Activated B cell treated with CpG ODN at 0.5 μM for 24 hours (primary cell): ENCODE measurements at regions of chr7 and their contacts with region 1.

Region 1: GRCh38 chr7:100604028-100604975 is 2.1 kb downstream of the PCOLCE start:
- DNase-seq: peak; percentile 75
- ATAC-seq: peak; percentile 78
- H3K4me3 Mint-ChIP-seq: peak overlapping the region; percentile 85
- H3K27ac Mint-ChIP-seq: peak overlapping the region; percentile 30
- H3K4me1 Mint-ChIP-seq: peaks cover 19% of the 10 kb centered on the region
- H3K27me3 Mint-ChIP-seq: no peaks in the 10 kb centered on the region
- CTCF ChIP-seq: no peak

Region 2: DNA sequence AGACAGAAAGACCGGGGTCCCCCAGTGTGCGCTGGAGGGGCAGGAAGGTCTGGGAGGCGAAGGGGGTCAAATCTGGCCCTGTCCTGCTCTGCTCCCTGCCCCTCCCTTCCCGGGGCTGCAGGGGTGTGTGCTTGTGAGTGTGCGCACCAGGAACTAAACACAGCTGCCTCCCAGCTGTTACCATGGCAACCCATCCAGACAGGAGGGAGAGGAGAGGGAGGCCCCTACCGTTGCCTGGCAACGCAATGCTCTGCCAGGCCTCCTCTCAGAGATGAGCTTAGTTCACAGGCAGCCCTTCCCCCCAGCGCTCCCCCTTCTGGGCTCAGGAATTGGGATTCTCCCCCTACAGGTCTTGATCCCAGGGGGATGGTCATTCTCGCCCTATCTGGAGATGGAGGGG is 114.5 kb before region 1 on chr7:
- CTCF ChIA-PET with region 1: no interaction called
- POLR2A ChIA-PET with region 1: no interaction called
- intact Hi-C with region 1: no loop called
- DNase-seq: no peak
- ATAC-seq: peak; percentile 35
- H3K4me3 Mint-ChIP-seq: no peak overlapping the region
- H3K27ac Mint-ChIP-seq: no peak overlapping the region
- H3K4me1 Mint-ChIP-seq: peaks cover 6% of the 10 kb centered on the region
- H3K27me3 Mint-ChIP-seq: peaks cover 26% of the 10 kb centered on the region
- CTCF ChIP-seq: no peak

Region 3: DNA sequence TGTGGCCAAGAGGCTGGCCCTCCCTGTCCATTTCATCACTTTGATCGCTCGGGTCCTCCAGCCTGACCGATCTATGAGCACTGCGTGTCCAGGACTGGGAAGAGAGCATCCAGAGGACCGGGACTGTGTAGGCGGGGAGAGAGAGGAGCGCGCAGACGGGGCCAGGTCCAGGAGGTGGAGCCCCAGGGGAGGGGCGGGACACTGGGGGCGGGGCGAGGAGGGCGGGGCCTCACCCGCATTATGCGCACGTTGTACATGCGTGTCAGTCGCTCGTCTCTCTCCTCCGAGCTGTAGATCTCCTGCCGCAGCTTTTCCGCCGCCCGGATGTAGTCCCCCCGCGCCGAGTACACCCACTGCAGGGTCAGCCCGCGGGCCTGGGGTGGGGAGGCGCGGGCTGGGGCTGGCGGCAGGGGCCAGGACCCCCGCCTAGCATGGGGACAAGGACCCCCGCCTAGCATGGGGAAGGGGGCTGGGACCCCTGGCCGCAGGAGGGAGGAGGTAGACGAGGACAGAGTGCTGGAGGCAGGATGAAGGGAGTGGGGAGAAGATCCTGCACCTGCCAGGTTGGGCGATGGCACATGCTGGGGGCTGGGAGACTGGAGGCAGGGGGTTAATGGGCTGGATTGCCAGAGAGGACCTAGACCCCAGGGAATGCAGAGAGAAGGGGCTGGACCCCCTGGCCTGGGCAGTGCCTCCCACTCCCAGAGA is 22.4 kb after region 1 on chr7:
- CTCF ChIA-PET with region 1: no interaction called
- POLR2A ChIA-PET with region 1: no interaction called
- intact Hi-C with region 1: loop called (anchors 2 kb)
- DNase-seq: peak; percentile 58
- ATAC-seq: peak; percentile 100
- H3K4me3 Mint-ChIP-seq: peak overlapping the region; percentile 67
- H3K27ac Mint-ChIP-seq: no peak overlapping the region
- H3K4me1 Mint-ChIP-seq: peaks cover 10% of the 10 kb centered on the region
- H3K27me3 Mint-ChIP-seq: no peaks in the 10 kb centered on the region
- CTCF ChIP-seq: no peak

Region 4: DNA sequence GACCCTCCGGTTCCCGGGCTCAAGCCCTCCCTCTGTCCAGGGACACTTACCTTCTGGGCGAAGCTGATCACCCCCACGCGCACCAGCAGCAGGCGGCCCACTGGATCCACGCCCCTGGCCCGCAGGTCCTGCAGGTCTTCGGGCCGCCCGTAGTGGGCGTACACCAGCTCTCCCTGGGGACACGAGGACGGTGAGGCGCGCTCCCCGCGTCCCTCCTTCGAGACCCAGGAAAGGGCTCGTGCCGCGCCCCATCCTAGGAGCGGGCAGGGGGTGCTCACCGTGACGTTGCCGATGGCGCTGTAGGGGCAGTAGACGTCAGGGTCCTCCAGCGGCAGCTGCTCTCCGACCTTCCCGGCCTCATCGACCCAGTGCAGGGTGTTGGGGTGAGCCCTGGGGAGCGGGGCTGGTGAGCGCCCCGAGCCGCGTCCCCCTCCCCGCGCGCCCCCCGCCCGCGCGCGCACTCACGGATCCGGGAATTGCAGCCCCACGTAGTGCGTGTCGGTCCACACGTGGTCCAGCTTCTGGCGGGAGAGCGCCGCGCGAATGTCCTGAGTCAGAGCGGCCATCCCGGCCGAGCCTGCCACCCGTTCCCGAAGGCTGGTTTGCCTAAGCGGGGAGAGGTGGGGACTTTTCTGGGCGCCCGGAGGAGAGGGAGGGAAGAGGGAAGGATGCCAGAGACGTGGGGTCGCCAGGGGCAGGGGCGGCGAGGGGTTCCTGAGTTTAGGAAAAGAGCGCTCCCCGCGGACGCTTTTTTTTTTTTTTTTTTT is 28.8 kb after region 1 on chr7:
- CTCF ChIA-PET with region 1: interaction called, 3 read pairs
- POLR2A ChIA-PET with region 1: interaction called, 11 read pairs
- intact Hi-C with region 1: loop called (anchors 1 kb)
- DNase-seq: peak; percentile 63
- ATAC-seq: peak; percentile 71
- H3K4me3 Mint-ChIP-seq: peak overlapping the region; percentile 89
- H3K27ac Mint-ChIP-seq: peak overlapping the region; percentile 78
- H3K4me1 Mint-ChIP-seq: peaks cover 4% of the 10 kb centered on the region
- H3K27me3 Mint-ChIP-seq: no peaks in the 10 kb centered on the region
- CTCF ChIP-seq: no peak

Region 5: GRCh38 chr7:100726996-100727761 is 122.9 kb after region 1 on chr7:
- CTCF ChIA-PET with region 1: no interaction called
- POLR2A ChIA-PET with region 1: no interaction called
- intact Hi-C with region 1: loop called (anchors 1 kb)
- DNase-seq: no peak
- ATAC-seq: no peak
- H3K4me3 Mint-ChIP-seq: no peak overlapping the region
- H3K27ac Mint-ChIP-seq: no peak overlapping the region
- H3K4me1 Mint-ChIP-seq: peaks cover 5% of the 10 kb centered on the region
- H3K27me3 Mint-ChIP-seq: peaks cover 19% of the 10 kb centered on the region
- CTCF ChIP-seq: no peak

Region 6: DNA sequence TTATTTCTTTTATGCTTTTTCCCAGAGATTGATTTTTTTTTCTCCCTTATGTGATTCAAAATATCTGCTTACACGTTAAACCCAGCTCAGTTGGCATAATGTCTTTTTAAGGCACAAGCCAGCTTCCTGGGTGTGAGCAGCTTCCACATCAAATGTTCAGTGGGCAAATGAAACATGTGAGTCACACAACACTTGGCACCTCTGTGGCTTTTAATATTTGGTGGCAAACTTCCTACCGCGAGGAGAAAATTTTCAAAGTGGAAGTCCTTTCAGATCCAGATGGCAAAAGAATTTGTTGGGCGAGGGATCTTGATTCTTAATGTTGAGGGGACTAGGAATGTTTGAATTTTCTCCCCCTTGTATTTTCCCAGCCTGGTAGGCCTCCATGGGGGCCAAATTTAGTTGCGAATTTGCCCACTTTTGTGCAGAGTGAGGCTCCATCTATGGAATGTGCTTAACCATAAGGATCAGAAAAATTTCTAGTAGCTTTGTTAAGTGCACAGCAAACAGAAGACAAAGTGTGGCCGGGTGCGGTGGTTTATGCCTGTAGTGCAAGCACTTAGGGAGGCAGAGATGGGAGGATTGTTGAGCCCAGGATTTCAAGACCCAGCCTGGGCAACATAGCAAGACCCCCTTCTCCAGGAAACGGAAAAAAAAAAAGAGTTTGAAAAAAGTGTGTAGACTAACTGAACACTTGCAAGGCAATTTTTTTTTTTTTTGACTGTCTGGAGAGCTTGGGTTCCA is 1244.1 kb after region 1 on chr7:
- CTCF ChIA-PET with region 1: no interaction called
- POLR2A ChIA-PET with region 1: no interaction called
- intact Hi-C with region 1: no loop called
- DNase-seq: no peak
- ATAC-seq: no peak
- H3K4me3 Mint-ChIP-seq: no peak overlapping the region
- H3K27ac Mint-ChIP-seq: no peak overlapping the region
- H3K4me1 Mint-ChIP-seq: peaks cover 5% of the 10 kb centered on the region
- H3K27me3 Mint-ChIP-seq: no peaks in the 10 kb centered on the region
- CTCF ChIP-seq: no peak

Region 7: DNA sequence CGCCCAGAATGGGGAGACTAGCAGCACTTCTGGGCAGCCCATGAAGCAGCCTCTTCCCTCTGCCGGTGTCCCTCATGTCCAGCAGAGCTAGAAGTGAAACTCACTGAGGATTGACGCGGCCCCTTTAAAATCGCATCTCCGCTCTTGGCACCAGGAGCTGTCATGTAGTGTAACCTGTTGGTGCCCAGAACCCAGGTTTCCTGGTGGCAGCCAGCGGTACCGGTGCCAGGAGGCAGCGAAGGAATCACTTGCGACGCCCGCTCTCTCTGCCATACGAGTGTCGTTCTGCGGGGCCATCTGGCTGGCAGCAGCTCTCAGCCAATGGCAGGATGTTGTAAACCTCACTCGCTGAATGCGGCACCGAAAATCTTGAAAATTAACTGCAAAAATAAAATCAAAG is 1295.8 kb after region 1 on chr7:
- CTCF ChIA-PET with region 1: no interaction called
- POLR2A ChIA-PET with region 1: no interaction called
- intact Hi-C with region 1: no loop called
- DNase-seq: no peak
- ATAC-seq: no peak
- H3K4me3 Mint-ChIP-seq: no peak overlapping the region
- H3K27ac Mint-ChIP-seq: no peak overlapping the region
- H3K4me1 Mint-ChIP-seq: peaks cover 13% of the 10 kb centered on the region
- H3K27me3 Mint-ChIP-seq: no peaks in the 10 kb centered on the region
- CTCF ChIP-seq: no peak